CD4-positive, alpha-beta memory T cell (primary cell): ENCODE measurements at regions of chr19 and their contacts with region 1.

Region 1: GRCh38 chr19:39970675-39971379 is at the start of gene PSMC4:
- DNase-seq: peak; percentile 98 to 99 (median 98)
- H3K4me3 ChIP-seq: peak within 1 kb of the TSS; percentile 63 to 98
- H3K4me3 Mint-ChIP-seq: peak within 1 kb of the TSS; percentile 94 to 100 (median 96)
- H3K27ac ChIP-seq: peak within 1 kb of the TSS; percentile 94
- H3K27ac Mint-ChIP-seq: peak within 1 kb of the TSS; percentile 91 to 100 (median 99)
- H3K4me1 ChIP-seq: peaks cover 43% of the 10 kb centered on the region
- H3K4me1 Mint-ChIP-seq: peaks cover 41 to 59% (median 50%) of the 10 kb centered on the region in 4 donors
- H3K27me3 ChIP-seq: no peaks in the 10 kb centered on the region
- H3K27me3 Mint-ChIP-seq: no peaks in the 10 kb centered on the region
- total RNA-seq, gene PSMC4: 53.1 to 56.3 TPM

Region 2: DNA sequence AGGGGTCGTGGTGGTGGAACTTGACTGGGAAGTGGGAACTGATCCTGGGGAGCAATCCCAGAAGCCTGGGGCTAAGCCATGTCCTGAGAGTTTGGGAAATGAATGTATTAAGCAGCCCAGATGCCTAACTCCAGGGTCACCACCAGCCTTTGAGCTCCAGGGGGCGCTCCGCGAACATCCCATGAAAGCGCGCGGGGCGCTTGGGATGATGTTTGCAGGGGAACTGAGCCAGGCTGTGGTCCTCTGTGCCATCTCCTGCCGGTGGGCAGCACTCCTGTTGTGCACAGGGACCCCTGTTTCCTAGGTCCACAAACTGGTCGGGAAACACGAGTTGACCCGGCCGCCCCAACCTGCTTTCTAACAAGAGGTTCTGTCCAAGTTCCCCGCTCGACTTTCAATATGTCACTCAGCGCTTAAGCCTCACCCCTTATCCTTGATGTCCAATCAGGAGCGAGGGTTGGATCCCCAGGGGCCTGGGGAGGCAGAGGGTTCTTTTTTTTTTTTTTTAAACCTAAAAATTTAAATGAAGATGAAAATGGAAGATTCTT is 177.8 kb before region 1 on chr19:
- CTCF ChIA-PET with region 1: interaction called, 30 read pairs
- POLR2A ChIA-PET with region 1: no interaction called
- intact Hi-C with region 1: loop called (anchors 1 kb)
- DNase-seq: peak; percentile 67 to 78 (median 69)
- H3K4me3 ChIP-seq: peak overlapping the region; percentile 63 to 73
- H3K4me3 Mint-ChIP-seq: peak overlapping the region; percentile 71 to 85 (median 80)
- H3K27ac ChIP-seq: no peak overlapping the region
- H3K27ac Mint-ChIP-seq: peak overlapping the region in 2 of 7 donors; percentile 19 to 69
- H3K4me1 ChIP-seq: peaks cover 3% of the 10 kb centered on the region
- H3K4me1 Mint-ChIP-seq: peaks cover 0 to 5% (median 2%) of the 10 kb centered on the region in 4 donors
- H3K27me3 ChIP-seq: no peaks in the 10 kb centered on the region
- H3K27me3 Mint-ChIP-seq: peaks cover 0 to 9% of the 10 kb centered on the region in 2 donors

Region 3: DNA sequence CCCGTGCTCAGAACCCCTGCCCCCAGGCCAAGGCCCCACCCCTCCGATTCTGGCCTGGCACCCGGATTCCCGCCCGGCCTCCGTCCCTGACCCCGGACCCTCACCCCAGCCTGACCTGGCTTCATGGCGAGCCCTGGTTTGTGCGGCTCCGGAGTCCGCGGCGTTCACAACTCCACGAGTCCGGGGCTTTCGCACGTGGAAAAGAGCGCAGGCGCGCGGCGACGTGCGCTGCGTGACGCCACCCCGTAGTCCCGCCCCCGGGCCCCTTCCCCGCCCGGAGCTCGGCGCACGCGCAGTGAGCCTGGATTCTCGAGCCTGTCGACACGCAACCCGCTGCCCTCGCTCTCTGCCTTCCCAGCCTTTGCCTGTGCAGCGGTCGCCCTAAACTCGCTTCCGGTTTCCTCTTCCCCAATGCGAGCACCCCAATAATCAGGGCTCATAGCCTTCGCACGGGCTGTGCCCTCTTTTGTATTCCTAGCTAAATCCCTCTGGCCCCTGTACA is 124.6 kb before region 1 on chr19 and contains the start of gene FBL:
- CTCF ChIA-PET with region 1: interaction called, 55 read pairs
- POLR2A ChIA-PET with region 1: interaction called, 22 read pairs
- intact Hi-C with region 1: no loop called
- DNase-seq: peak; percentile 94 to 98 (median 96)
- H3K4me3 ChIP-seq: peak within 1 kb of the TSS; percentile 63 to 78
- H3K4me3 Mint-ChIP-seq: peak within 1 kb of the TSS; percentile 88 to 93 (median 92)
- H3K27ac ChIP-seq: peak within 1 kb of the TSS; percentile 86
- H3K27ac Mint-ChIP-seq: peak within 1 kb of the TSS; percentile 92 to 98 (median 97)
- H3K4me1 ChIP-seq: peaks cover 49% of the 10 kb centered on the region
- H3K4me1 Mint-ChIP-seq: peaks cover 38 to 62% (median 47%) of the 10 kb centered on the region in 4 donors
- H3K27me3 ChIP-seq: no peaks in the 10 kb centered on the region
- H3K27me3 Mint-ChIP-seq: no peaks in the 10 kb centered on the region
- total RNA-seq, gene FBL: 282 to 295 TPM

Region 4: DNA sequence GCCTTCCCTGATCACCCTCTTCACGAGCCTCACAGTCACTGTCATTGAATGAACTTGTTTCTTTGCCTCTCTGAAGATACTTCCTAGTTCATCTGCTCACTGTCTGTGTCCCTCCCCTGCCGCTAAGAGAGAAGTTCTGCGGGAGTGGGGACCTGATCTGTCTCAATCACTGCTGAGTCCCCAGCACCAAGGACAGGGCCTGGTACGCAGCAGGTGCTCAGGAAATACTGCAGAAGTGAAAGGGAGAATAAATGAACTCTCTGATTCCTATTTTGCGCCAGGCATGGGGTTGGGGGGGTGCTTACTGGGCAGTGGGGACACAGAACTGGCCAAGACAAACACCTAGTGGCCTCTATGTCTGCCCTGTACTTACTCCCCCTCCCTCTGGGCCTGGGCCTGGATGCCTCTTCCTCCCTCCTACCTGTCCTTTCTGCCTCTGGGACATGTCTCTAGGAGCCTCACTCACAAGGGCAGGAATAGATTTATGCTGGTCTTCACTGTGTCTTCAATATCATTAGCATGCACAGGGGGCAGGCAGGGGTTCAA is 53.9 kb before region 1 on chr19:
- CTCF ChIA-PET with region 1: interaction called, 35 read pairs
- POLR2A ChIA-PET with region 1: interaction called, 13 read pairs
- intact Hi-C with region 1: loop called (anchors 5 kb)
- DNase-seq: no peak
- H3K4me3 ChIP-seq: no peak overlapping the region
- H3K4me3 Mint-ChIP-seq: no peak overlapping the region
- H3K27ac ChIP-seq: no peak overlapping the region
- H3K27ac Mint-ChIP-seq: peak overlapping the region in 4 of 7 donors; percentile 0 to 66 (median 48)
- H3K4me1 ChIP-seq: no peaks in the 10 kb centered on the region
- H3K4me1 Mint-ChIP-seq: peaks cover 5 to 12% (median 8%) of the 10 kb centered on the region in 4 donors
- H3K27me3 ChIP-seq: no peaks in the 10 kb centered on the region
- H3K27me3 Mint-ChIP-seq: no peaks in the 10 kb centered on the region

Region 5: GRCh38 chr19:39951686-39952085 is 19.1 kb before region 1 on chr19:
- CTCF ChIA-PET with region 1: interaction called, 151 read pairs
- POLR2A ChIA-PET with region 1: interaction called, 80 read pairs
- intact Hi-C with region 1: loop called (anchors 2 kb)
- DNase-seq: no peak
- H3K4me3 ChIP-seq: peak overlapping the region in 1 of 2 donors; percentile 23
- H3K4me3 Mint-ChIP-seq: peak overlapping the region in 7 of 8 donors; percentile 65 to 93 (median 91)
- H3K27ac ChIP-seq: peak overlapping the region; percentile 57
- H3K27ac Mint-ChIP-seq: peak overlapping the region; percentile 88 to 99 (median 97)
- H3K4me1 ChIP-seq: peaks cover 83% of the 10 kb centered on the region
- H3K4me1 Mint-ChIP-seq: peaks cover 50 to 93% (median 69%) of the 10 kb centered on the region in 4 donors
- H3K27me3 ChIP-seq: no peaks in the 10 kb centered on the region
- H3K27me3 Mint-ChIP-seq: no peaks in the 10 kb centered on the region

Region 6: DNA sequence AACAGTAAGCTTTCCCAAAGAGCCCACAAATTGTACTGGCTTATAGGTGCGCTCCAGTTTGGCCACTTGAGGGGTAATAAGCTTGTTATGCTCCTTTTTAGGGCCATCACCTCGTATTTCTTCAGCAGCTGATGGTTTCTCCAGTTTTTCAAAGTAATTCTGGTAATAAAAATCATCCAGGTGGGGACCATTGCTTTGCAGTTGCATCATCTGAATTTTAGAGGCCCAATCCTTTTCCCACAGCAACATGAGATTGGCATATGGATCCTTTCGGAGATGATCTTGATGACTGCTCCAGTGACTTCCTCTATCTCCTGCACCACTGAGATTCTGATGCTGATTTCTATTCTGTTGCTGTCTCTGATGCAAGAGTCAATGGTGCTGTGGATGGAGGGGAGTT is 53.1 kb after region 1 on chr19:
- CTCF ChIA-PET with region 1: no interaction called
- POLR2A ChIA-PET with region 1: no interaction called
- intact Hi-C with region 1: no loop called
- DNase-seq: no peak
- H3K4me3 ChIP-seq: no peak overlapping the region
- H3K4me3 Mint-ChIP-seq: no peak overlapping the region
- H3K27ac ChIP-seq: no peak overlapping the region
- H3K27ac Mint-ChIP-seq: no peak overlapping the region
- H3K4me1 ChIP-seq: no peaks in the 10 kb centered on the region
- H3K4me1 Mint-ChIP-seq: no peaks in the 10 kb centered on the region
- H3K27me3 ChIP-seq: no peaks in the 10 kb centered on the region
- H3K27me3 Mint-ChIP-seq: no peaks in the 10 kb centered on the region

Region 7: GRCh38 chr19:40090241-40091204 is 119.7 kb after region 1 on chr19 and contains the start of gene ZNF780A:
- CTCF ChIA-PET with region 1: interaction called, 3 read pairs
- POLR2A ChIA-PET with region 1: interaction called, 16 read pairs
- intact Hi-C with region 1: loop called (anchors 1 kb)
- DNase-seq: peak; percentile 74 to 85 (median 78)
- H3K4me3 ChIP-seq: peak within 1 kb of the TSS; percentile 66 to 83
- H3K4me3 Mint-ChIP-seq: peak within 1 kb of the TSS; percentile 98 to 100 (median 100)
- H3K27ac ChIP-seq: peak within 1 kb of the TSS; percentile 88
- H3K27ac Mint-ChIP-seq: peak within 1 kb of the TSS; percentile 99 to 100 (median 100)
- H3K4me1 ChIP-seq: peaks cover 34% of the 10 kb centered on the region
- H3K4me1 Mint-ChIP-seq: peaks cover 29 to 50% (median 39%) of the 10 kb centered on the region in 4 donors
- H3K27me3 ChIP-seq: peaks cover 3% of the 10 kb centered on the region
- H3K27me3 Mint-ChIP-seq: peaks cover 3% of the 10 kb centered on the region in 2 donors
- total RNA-seq, gene ZNF780A: 43.5 to 46.5 TPM

Region 8: GRCh38 chr19:40217027-40217810 is 246.4 kb after region 1 on chr19:
- CTCF ChIA-PET with region 1: no interaction called
- POLR2A ChIA-PET with region 1: no interaction called
- intact Hi-C with region 1: no loop called
- DNase-seq: no peak
- H3K4me3 ChIP-seq: no peak overlapping the region
- H3K4me3 Mint-ChIP-seq: peak overlapping the region in 1 of 8 donors; percentile 14
- H3K27ac ChIP-seq: no peak overlapping the region
- H3K27ac Mint-ChIP-seq: peak overlapping the region in 1 of 7 donors; percentile 40
- H3K4me1 ChIP-seq: peaks cover 12% of the 10 kb centered on the region
- H3K4me1 Mint-ChIP-seq: peaks cover 7 to 14% (median 10%) of the 10 kb centered on the region in 4 donors
- H3K27me3 ChIP-seq: peaks cover 25% of the 10 kb centered on the region
- H3K27me3 Mint-ChIP-seq: peaks cover 30 to 36% of the 10 kb centered on the region in 2 donors